ENCODE measurements at regions of chr12 and their contacts with region 1.

Region 1: DNA sequence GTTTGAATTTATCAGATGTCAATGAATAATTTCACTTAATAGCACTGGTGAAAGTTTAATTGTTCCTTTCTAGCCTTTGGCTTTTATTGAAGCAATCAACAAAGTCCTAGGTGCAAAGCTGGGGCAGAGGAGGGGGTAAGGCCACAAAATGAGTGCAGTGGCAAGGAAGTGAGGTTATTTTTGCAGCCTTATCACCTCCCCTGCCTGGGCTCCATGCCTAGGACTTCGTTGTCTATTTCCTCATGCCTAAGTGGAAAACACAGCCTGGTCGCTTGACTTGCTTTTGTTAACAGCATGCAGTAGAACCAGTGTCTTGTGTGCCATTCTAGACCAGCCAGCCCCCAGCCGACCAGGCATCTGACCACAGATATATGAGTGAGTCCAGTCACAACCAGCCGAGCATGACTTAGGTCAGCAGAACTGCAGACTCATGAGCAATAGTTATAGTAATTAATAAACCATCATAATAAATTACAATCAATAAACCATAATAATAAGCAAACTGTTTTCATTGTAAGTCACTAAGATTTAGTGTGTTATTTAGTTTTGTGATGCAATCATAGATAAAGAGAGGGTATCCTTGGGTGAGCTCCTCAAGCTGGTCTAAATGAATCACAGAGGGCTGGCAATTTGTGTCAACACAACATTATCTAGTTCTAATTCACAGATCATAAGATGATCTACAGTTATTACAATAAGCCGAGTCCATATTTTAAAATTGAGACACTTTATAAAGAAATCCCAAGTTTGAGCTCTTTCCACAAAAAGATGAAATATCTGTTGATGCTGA is 156.8 kb downstream of the GLT1D1 start:
- DNase-seq: no peak
- H3K4me3 ChIP-seq: no peak overlapping the region
- H3K27ac ChIP-seq: no peak overlapping the region
- H3K4me1 ChIP-seq: no peaks in the 10 kb centered on the region
- H3K27me3 ChIP-seq: peaks cover 30% of the 10 kb centered on the region
- CTCF ChIP-seq: no peak

Region 2: DNA sequence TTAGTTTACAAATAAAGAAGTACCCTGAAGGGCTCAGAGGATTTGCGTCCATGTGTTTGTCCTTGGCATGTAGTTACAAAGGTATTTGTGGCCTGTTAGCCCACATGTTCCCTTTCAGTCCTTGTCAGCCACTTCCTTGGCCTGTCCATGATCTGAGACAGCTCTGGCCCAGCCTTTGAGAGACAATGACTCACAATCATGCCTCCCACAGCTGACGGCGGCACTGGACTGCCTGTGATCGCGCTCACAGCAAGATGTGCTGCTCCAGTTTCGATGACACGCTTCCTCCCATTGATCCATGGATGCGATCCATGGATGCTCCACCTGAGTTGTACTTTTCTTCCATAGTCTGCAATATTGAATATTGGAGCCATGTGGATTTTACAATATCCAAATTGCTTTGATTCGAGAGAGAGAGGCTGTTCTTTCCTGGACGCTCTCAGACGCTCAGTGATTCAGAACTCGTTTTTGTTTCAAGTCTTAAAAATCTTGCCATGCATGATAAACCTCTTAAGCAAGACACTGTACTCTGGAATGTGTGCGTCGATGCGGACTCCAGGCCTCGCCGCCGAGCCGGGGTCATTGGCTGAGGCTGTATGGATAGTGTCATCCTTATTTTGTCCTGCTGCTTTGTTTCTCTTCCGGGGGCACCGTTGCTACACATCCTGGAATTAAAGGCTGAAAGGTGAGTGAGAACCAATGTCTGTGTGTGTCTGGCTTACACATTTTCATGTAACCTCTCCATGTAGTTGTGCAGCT is 63.3 kb after region 1 on chr12:
- intact Hi-C with region 1: loop called (anchors 2 kb)
- DNase-seq: no peak
- H3K4me3 ChIP-seq: no peak overlapping the region
- H3K27ac ChIP-seq: no peak overlapping the region
- H3K4me1 ChIP-seq: no peaks in the 10 kb centered on the region
- H3K27me3 ChIP-seq: peaks cover 58% of the 10 kb centered on the region
- CTCF ChIP-seq: no peak

Region 3: GRCh38 chr12:129570796-129571400 is 560.9 kb after region 1 on chr12:
- intact Hi-C with region 1: no loop called
- DNase-seq: no peak
- H3K4me3 ChIP-seq: no peak overlapping the region
- H3K27ac ChIP-seq: no peak overlapping the region
- H3K4me1 ChIP-seq: no peaks in the 10 kb centered on the region
- H3K27me3 ChIP-seq: no peaks in the 10 kb centered on the region
- CTCF ChIP-seq: no peak